A673 (cell line): ENCODE measurements at regions of chr17 and their contacts with region 1.

Region 1: GRCh38 chr17:17774009-17774881 is 62.5 kb downstream of the SREBF1 start:
- DNase-seq: no peak
- H3K4me3 ChIP-seq: no peak overlapping the region
- H3K27ac ChIP-seq: no peak overlapping the region
- H3K4me1 ChIP-seq: peaks cover 18% of the 10 kb centered on the region
- H3K27me3 ChIP-seq: no peaks in the 10 kb centered on the region
- CTCF ChIP-seq: peak; percentile 46

Region 2: GRCh38 chr17:17729620-17730249 is 44.5 kb before region 1 on chr17:
- CTCF ChIA-PET with region 1: no interaction called
- POLR2A ChIA-PET with region 1: no interaction called
- intact Hi-C with region 1: no loop called
- DNase-seq: no peak
- H3K4me3 ChIP-seq: no peak overlapping the region
- H3K27ac ChIP-seq: no peak overlapping the region
- H3K4me1 ChIP-seq: peaks cover 35% of the 10 kb centered on the region
- H3K27me3 ChIP-seq: no peaks in the 10 kb centered on the region
- CTCF ChIP-seq: peak; percentile 58

Region 3: DNA sequence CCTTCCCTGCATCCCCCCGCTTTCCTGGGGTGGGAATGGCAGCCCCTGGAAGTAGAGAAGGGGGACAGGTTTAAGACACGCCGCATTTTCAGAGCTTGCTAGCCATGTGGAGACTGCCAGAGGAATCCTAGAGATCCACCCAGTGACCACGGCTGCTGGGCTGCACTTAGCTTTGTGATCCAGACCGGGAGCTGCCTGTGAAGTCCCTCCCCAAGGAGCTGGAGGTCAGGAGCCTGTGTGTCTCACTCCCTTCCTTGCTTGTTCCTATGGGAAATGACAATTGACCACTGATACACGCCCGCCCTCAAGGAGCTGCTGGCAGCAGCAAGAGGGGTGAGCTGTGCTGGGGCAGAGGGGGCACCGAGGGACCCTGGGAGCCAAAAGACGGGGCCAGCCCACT is 11.1 kb before region 1 on chr17:
- CTCF ChIA-PET with region 1: interaction called, 6 read pairs
- POLR2A ChIA-PET with region 1: interaction called, 11 read pairs
- intact Hi-C with region 1: no loop called
- DNase-seq: no peak
- H3K4me3 ChIP-seq: no peak overlapping the region
- H3K27ac ChIP-seq: peak overlapping the region; percentile 31
- H3K4me1 ChIP-seq: peaks cover 30% of the 10 kb centered on the region
- H3K27me3 ChIP-seq: no peaks in the 10 kb centered on the region
- CTCF ChIP-seq: no peak

Region 4: DNA sequence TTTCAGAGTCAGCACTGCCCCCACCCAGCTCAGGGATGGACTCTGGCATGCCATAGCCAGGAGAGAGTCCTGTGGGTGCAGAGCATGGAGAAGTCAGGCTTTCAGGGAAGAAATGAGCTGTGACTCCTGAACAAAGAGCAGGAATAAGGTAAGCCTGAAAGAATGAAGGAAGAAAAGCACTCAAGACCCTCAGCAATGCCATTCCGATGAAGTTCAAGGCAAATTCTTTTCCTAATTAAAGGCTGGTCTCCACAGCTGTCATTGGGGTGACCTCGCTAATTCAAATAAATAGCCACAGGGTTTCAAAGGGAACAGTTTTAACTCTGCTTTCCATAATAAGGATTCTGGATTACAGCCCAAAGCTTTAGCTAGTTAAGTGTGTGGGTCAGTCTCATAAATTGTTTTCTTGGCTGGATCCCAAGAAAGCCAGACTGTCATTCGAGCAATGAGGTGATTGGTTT is 166.2 kb after region 1 on chr17:
- CTCF ChIA-PET with region 1: interaction called, 3 read pairs
- POLR2A ChIA-PET with region 1: interaction called, 10 read pairs
- intact Hi-C with region 1: no loop called
- DNase-seq: peak; percentile 59
- H3K4me3 ChIP-seq: no peak overlapping the region
- H3K27ac ChIP-seq: no peak overlapping the region
- H3K4me1 ChIP-seq: peaks cover 54% of the 10 kb centered on the region
- H3K27me3 ChIP-seq: no peaks in the 10 kb centered on the region
- CTCF ChIP-seq: no peak